Ascending aorta (tissue), 2 donors: ENCODE measurements at regions of chr6 and their contacts with region 1.

Region 1: DNA sequence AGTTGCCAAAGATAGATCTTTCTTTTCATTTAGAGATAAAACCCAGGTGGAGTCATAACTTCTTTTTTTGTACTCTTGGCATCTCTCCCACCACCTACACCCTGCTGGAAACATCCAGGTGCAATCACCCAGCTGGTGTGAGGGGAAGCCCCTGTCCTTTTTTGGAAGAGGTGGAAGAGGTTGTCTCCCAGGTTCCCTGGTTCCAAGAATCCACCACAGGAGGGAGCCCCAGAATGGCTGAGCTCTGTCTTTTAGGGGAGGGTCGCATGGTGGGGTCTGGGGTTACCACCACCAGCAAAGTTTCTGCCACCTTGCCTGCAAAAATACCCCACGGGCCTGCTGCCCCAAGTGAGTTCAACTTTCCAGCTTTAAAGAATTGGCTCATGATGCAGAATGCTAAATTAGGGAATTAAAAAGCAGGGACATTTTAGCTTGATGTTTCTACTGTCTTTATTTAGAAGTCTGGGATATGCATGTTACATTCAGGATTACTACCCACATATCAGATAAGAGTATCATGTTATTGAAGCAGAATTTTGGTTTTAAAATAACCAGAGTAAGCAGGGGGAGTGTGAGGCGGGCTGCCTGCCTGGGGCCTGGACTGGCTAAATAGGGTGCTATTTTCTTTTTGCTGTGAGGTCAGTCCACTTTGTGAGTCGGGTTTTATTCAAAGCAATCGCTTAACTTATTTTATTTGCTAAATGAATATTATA is 11.0 kb downstream of the SMOC2 start:
- DNase-seq: no peak
- H3K4me3 ChIP-seq: peak overlapping the region in 1 of 2 donors; percentile 36
- H3K27ac ChIP-seq: peak overlapping the region; percentile 90 to 94
- H3K4me1 ChIP-seq: peaks cover 24 to 46% of the 10 kb centered on the region in 2 donors
- H3K27me3 ChIP-seq: no peaks in the 10 kb centered on the region
- CTCF ChIP-seq: peak in 2 of 3 experiments; percentile 8 to 43

Region 2: GRCh38 chr6:168542301-168542700 is 90.3 kb after region 1 on chr6:
- intact Hi-C with region 1: loop called (anchors 2 kb)
- DNase-seq: no peak
- H3K4me3 ChIP-seq: no peak overlapping the region
- H3K27ac ChIP-seq: peak overlapping the region; percentile 67 to 71
- H3K4me1 ChIP-seq: peaks cover 13 to 47% of the 10 kb centered on the region in 2 donors
- H3K27me3 ChIP-seq: no peaks in the 10 kb centered on the region
- CTCF ChIP-seq: no peak

Region 3: GRCh38 chr6:168583821-168584220 is 131.9 kb after region 1 on chr6:
- intact Hi-C with region 1: loop called (anchors 5 kb)
- DNase-seq: no peak
- H3K4me3 ChIP-seq: no peak overlapping the region
- H3K27ac ChIP-seq: peak overlapping the region; percentile 36 to 69
- H3K4me1 ChIP-seq: peaks cover 6 to 12% of the 10 kb centered on the region in 2 donors
- H3K27me3 ChIP-seq: no peaks in the 10 kb centered on the region
- CTCF ChIP-seq: no peak